ENCODE measurements at regions of chr18 and their contacts with region 1.

Region 1: GRCh38 chr18:62714671-62715435 is 488 bp upstream of the PHLPP1 start:
- DNase-seq: peak; percentile 100
- H3K4me3 ChIP-seq: peak overlapping the region in 3 of 4 donors; percentile 72 to 88 (median 81)
- H3K27ac ChIP-seq: peak overlapping the region; percentile 92 to 98 (median 95)
- H3K4me1 ChIP-seq: peaks cover 0 to 37% (median 32%) of the 10 kb centered on the region in 4 donors
- H3K27me3 ChIP-seq: no peaks in the 10 kb centered on the region
- CTCF ChIP-seq: peak; percentile 65 to 78 (median 70)
- EP300 ChIP-seq: peak; percentile 17 to 71 (median 51)
- POLR2A ChIP-seq: no peak

Region 2: DNA sequence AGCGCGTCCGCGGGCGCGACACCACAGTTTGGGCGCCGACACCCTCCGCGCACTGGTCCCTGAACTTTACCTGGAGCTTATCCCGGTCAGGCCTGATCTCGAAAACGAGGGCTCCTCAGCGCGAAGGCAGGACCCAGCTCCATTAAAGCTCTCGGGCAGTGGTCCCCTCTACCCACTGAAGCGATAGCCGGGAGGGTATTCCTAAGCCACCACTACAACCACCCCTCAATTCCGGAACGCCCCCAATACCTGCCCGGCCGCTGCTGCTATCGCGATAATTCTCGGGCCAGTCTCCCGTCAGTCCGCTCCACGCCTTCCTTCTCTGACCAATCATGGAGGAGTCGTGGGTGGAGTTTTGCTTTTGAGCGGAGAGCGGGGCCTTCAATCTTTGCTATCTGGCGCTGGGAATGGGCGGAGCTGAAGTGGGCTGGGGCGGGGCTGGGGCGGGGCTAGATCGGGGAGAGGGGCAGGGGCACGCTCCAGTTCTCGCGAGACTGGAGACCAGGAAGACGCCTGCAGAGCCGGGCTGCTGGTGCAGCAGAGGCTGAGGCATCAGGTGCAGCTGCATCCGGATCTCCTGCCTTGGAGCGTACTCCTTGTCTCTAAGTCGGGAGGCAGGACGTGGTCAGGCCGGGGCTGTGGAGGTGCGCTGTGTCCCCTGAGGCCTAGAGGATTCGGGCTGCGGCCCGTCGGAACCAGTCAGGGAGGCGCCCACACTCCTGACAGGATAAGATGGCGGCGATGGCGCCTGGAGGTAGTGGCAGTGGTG is 527.9 kb before region 1 on chr18 and contains the starts of genes PIGN and RELCH:
- intact Hi-C with region 1: loop called (anchors 1 kb)
- DNase-seq: peak; percentile 98
- H3K4me3 ChIP-seq: peak within 1 kb of the TSS; percentile 85 to 97 (median 91)
- H3K27ac ChIP-seq: peak within 1 kb of the TSS; percentile 79 to 90 (median 85)
- H3K4me1 ChIP-seq: peaks cover 0 to 41% (median 30%) of the 10 kb centered on the region in 4 donors
- H3K27me3 ChIP-seq: no peaks in the 10 kb centered on the region
- CTCF ChIP-seq: no peak
- EP300 ChIP-seq: no peak
- POLR2A ChIP-seq: peak; percentile 77 to 88
- total RNA-seq, gene PIGN: 18.4 to 23.2 (median 19.8) TPM
- total RNA-seq, gene RELCH: 19.3 to 28.8 (median 25.3) TPM

Region 3: DNA sequence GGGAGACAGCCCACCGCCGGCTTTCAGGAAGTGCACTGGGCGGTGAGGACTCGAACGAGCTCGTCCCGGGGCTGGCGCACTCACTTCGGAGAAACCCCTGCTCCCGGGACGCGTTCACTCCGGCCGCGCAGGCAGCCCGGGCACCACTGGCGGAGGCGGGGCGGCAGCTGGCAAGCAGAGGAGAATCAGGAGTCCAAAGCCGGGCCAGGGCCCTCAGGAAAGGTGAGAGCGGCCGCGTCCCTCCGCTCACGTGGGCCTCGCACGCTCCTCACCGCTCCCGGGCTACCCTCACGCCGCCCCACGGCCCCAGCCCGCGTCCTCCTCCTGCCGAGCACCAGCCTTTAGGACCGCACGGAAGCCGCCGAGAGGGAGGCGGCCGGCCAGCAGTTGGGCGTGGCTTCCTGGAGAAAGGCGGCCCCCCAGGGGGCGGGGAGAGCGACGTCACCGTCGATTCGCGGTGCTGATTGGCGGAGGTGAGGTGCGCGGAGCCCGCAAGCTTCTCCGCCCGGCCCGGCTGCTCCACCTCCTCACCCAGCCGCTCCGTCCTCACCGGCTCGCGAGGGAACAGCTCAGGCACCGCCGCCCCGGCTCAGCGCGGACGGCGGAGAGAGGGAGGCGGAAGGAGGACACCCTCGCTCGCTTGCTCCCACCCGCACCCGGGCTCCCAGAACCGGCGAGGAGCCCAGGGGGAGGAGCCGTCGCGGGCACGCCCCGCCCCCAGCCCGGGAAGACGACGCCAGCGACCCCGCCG is 192.2 kb before region 1 on chr18 and contains the start of gene ZCCHC2:
- intact Hi-C with region 1: loop called (anchors 2 kb)
- DNase-seq: peak; percentile 99
- H3K4me3 ChIP-seq: peak within 1 kb of the TSS; percentile 80 to 96 (median 83)
- H3K27ac ChIP-seq: peak within 1 kb of the TSS; percentile 93 to 99 (median 98)
- H3K4me1 ChIP-seq: peaks cover 0 to 29% (median 19%) of the 10 kb centered on the region in 4 donors
- H3K27me3 ChIP-seq: no peaks in the 10 kb centered on the region
- CTCF ChIP-seq: no peak
- EP300 ChIP-seq: peak in 2 of 4 donors; percentile 3 to 57
- POLR2A ChIP-seq: peak; percentile 37 to 63
- total RNA-seq, gene ZCCHC2: 14.4 to 23.5 (median 16.8) TPM

Region 4: DNA sequence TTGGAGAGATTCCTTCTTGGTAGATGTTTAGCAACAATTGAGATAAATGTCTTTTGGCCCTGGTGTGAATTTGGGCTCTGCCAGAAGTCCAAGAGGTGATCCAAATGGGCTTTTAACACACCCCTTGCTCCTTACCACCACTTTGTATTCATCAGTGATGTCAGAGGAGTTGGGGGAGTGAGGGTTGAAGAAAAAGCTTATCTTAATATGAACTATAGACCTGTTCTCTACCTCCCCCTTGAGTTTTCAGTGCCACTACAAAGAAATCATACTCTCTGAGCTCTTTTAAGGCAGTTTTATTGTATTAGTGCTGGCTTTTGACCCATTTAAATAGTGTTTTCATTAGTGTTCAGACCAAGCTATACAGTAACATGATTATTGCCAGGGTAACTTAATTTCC is 229.6 kb after region 1 on chr18:
- intact Hi-C with region 1: loop called (anchors 10 kb)
- DNase-seq: no peak
- H3K4me3 ChIP-seq: no peak overlapping the region
- H3K27ac ChIP-seq: no peak overlapping the region
- H3K4me1 ChIP-seq: peaks cover 0 to 6% (median 1%) of the 10 kb centered on the region in 4 donors
- H3K27me3 ChIP-seq: no peaks in the 10 kb centered on the region
- CTCF ChIP-seq: no peak
- EP300 ChIP-seq: no peak
- POLR2A ChIP-seq: no peak

Region 5: GRCh38 chr18:63422087-63422809 is 707.4 kb after region 1 on chr18 and contains the start of gene VPS4B:
- intact Hi-C with region 1: loop called (anchors 10 kb)
- DNase-seq: peak; percentile 100
- H3K4me3 ChIP-seq: peak within 1 kb of the TSS; percentile 68 to 89 (median 84)
- H3K27ac ChIP-seq: peak within 1 kb of the TSS; percentile 90 to 96 (median 92)
- H3K4me1 ChIP-seq: peaks cover 0 to 18% (median 15%) of the 10 kb centered on the region in 4 donors
- H3K27me3 ChIP-seq: no peaks in the 10 kb centered on the region
- CTCF ChIP-seq: no peak
- EP300 ChIP-seq: peak in 2 of 4 donors; percentile 51 to 81
- POLR2A ChIP-seq: peak; percentile 43 to 78
- total RNA-seq, gene VPS4B: 31.4 to 41.0 (median 38.3) TPM

Measured in sigmoid colon (tissue), 7 donors.